Activated naive CD4-positive, alpha-beta T cell treated with anti-CD3 and anti-CD28 coated beads for 36 hours (primary cell): ENCODE measurements at regions of chr1 and their contacts with region 1.

Region 1: GRCh38 chr1:212035123-212035834 is at the starts of genes DTL and INTS7:
- DNase-seq: peak; percentile 99
- H3K4me3 Mint-ChIP-seq: peak within 1 kb of the TSS; percentile 96
- H3K27ac Mint-ChIP-seq: peak within 1 kb of the TSS; percentile 98
- H3K4me1 Mint-ChIP-seq: peaks cover 53% of the 10 kb centered on the region
- H3K27me3 Mint-ChIP-seq: peaks cover 6% of the 10 kb centered on the region
- total RNA-seq, gene DTL: 106 to 121 TPM
- total RNA-seq, gene INTS7: 24.7 to 25.9 TPM

Region 2: GRCh38 chr1:210828996-210829596 is 1206.2 kb before region 1 on chr1:
- CTCF ChIA-PET with region 1: no interaction called
- intact Hi-C with region 1: no loop called
- DNase-seq: no peak
- H3K4me3 Mint-ChIP-seq: no peak overlapping the region
- H3K27ac Mint-ChIP-seq: no peak overlapping the region
- H3K4me1 Mint-ChIP-seq: no peaks in the 10 kb centered on the region
- H3K27me3 Mint-ChIP-seq: peaks cover 19% of the 10 kb centered on the region

Region 3: DNA sequence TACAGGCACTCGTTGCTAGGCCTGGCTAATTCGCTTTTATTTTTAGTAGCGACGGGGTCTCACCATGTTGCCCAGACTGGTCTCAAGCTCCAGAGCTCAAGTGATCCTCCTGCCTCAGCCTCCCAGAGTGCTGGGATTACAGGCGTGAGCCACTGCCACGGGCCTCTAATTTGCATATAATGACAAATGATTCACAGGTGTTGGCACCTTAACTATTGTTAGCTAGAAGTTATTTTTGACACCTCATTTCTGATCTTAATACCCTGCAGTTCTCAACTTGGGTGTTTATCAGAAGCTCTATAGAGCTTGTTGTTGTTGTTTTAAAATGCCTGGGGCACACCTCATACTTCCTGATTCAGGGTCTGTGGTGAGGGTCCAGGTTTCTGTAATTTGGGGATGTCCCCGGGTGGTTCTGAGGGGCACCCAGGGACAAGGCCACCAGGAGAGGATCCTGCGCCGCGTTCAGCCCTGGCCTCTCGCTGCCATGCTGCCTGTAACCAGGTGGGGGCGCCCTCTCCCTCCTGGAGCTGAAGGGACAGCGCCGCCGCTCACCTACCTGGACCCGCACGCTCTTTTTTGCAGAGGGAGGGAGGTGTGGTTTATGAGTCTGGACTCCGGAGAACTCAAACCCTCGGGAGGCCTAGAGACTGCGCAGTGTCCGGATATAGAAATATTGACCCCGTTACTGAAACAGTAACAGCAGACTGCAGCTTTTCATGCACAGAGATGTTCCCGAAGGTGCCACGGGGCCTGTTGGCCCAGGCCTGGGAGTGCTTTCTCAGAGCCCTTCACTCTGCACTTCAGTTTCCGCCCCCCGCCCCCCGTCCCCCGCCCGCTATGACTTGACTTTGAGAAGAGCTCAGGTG is 336.9 kb before region 1 on chr1:
- CTCF ChIA-PET with region 1: interaction called, 24 read pairs
- intact Hi-C with region 1: loop called (anchors 1 kb)
- DNase-seq: peak; percentile 92
- H3K4me3 Mint-ChIP-seq: peak overlapping the region; percentile 49
- H3K27ac Mint-ChIP-seq: no peak overlapping the region
- H3K4me1 Mint-ChIP-seq: peaks cover 14% of the 10 kb centered on the region
- H3K27me3 Mint-ChIP-seq: no peaks in the 10 kb centered on the region

Region 4: DNA sequence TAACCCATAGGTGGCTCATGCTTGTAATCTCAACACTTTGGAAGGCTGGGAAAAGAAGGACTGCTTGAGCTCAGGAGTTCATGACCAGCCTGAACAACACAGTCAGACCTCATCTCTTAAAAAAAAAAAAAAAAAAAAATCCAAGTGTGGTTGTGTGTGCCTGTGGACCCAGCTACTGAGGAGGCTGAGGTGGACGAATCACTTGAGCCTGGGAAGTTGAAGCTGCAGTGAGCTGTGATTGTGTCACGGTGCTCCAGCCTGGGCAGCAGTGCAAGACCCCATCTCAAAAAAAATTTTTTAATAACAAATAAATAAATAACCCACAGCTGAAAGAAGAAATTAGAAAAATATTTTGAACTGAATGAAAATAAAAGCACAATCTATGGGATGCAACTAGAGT is 13.7 kb before region 1 on chr1:
- CTCF ChIA-PET with region 1: interaction called, 10 read pairs
- intact Hi-C with region 1: loop called (anchors 1 kb)
- DNase-seq: no peak
- H3K4me3 Mint-ChIP-seq: no peak overlapping the region
- H3K27ac Mint-ChIP-seq: no peak overlapping the region
- H3K4me1 Mint-ChIP-seq: peaks cover 6% of the 10 kb centered on the region
- H3K27me3 Mint-ChIP-seq: no peaks in the 10 kb centered on the region

Region 5: GRCh38 chr1:212291505-212292134 is 256.3 kb after region 1 on chr1:
- CTCF ChIA-PET with region 1: interaction called, 9 read pairs
- intact Hi-C with region 1: loop called (anchors 1 kb)
- DNase-seq: no peak
- H3K4me3 Mint-ChIP-seq: no peak overlapping the region
- H3K27ac Mint-ChIP-seq: no peak overlapping the region
- H3K4me1 Mint-ChIP-seq: peaks cover 78% of the 10 kb centered on the region
- H3K27me3 Mint-ChIP-seq: no peaks in the 10 kb centered on the region

Region 6: GRCh38 chr1:212566522-212567479 is 531.5 kb after region 1 on chr1:
- CTCF ChIA-PET with region 1: no interaction called
- intact Hi-C with region 1: loop called (anchors 10 kb)
- DNase-seq: peak; percentile 80
- H3K4me3 Mint-ChIP-seq: peak overlapping the region; percentile 78
- H3K27ac Mint-ChIP-seq: peak overlapping the region; percentile 88
- H3K4me1 Mint-ChIP-seq: peaks cover 32% of the 10 kb centered on the region
- H3K27me3 Mint-ChIP-seq: no peaks in the 10 kb centered on the region

Region 7: GRCh38 chr1:213015099-213016050 is 980.1 kb after region 1 on chr1 and contains the start of gene ANGEL2:
- CTCF ChIA-PET with region 1: no interaction called
- intact Hi-C with region 1: loop called (anchors 5 kb)
- DNase-seq: peak; percentile 97
- H3K4me3 Mint-ChIP-seq: peak within 1 kb of the TSS; percentile 100
- H3K27ac Mint-ChIP-seq: peak within 1 kb of the TSS; percentile 99
- H3K4me1 Mint-ChIP-seq: peaks cover 27% of the 10 kb centered on the region
- H3K27me3 Mint-ChIP-seq: no peaks in the 10 kb centered on the region
- total RNA-seq, gene ANGEL2: 39.5 to 42.9 TPM